Activated CD8-positive, alpha-beta T cell treated with anti-CD3 and anti-CD28 coated beads for 36 hours (primary cell): ENCODE measurements at regions of chr17 and their contacts with region 1.

Region 1: DNA sequence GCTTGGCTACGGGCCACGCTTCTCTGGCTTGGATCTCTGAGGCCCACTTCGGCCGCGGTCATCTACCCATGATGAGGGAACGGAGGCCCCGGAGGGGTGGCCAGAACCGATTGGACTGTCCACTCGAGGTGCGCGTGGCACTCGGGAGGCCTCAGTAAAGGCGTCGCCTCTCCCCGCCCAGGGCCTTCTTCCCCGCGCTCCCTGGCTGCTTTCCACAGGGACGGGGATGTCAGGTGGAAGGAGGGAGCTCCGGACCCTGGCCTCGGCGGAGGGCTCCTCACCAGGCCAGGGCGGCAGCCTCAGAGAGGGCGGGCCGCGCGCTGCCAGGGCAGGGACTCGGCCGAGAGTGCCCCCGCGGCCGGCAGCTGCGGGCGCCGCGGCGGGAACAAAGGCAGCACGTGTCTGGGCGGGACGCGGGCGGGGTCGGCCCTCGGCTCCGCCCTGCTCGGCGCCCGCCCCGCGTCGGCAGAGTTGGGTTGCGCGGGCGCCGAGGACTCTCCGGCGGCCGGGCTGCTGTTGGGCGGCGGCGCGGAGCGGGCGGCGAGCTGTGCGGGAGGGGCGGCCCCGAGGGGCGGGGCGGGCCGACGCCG is 587 bp upstream of the CDK5R1 start:
- DNase-seq: peak; percentile 61
- ATAC-seq: peak; percentile 74
- H3K4me3 Mint-ChIP-seq: peak overlapping the region; percentile 61
- H3K27ac Mint-ChIP-seq: peak overlapping the region; percentile 16
- H3K4me1 Mint-ChIP-seq: peaks cover 50% of the 10 kb centered on the region
- H3K27me3 Mint-ChIP-seq: no peaks in the 10 kb centered on the region
- CTCF ChIP-seq: no peak

Region 2: DNA sequence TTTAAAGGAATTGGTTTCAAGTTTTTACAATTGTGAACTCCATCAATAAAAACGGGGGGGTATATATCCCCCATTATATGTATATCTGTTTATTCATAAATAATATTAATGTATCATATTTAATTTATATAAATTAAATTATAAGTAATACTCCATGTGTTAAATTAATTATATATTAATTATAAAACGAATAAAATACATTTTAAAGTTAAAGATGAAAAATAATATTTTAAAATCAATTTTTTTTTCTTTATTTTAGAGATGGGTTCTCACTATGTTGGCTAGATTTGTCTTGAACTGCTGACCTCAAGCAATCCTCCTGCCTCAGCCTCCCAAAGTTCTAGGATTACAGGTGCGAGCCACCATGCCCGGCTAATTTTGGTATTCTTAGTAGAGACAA is 59.3 kb before region 1 on chr17:
- CTCF ChIA-PET with region 1: no interaction called
- POLR2A ChIA-PET with region 1: no interaction called
- intact Hi-C with region 1: no loop called
- DNase-seq: no peak
- ATAC-seq: no peak
- H3K4me3 Mint-ChIP-seq: no peak overlapping the region
- H3K27ac Mint-ChIP-seq: no peak overlapping the region
- H3K4me1 Mint-ChIP-seq: no peaks in the 10 kb centered on the region
- H3K27me3 Mint-ChIP-seq: no peaks in the 10 kb centered on the region
- CTCF ChIP-seq: no peak

Region 3: DNA sequence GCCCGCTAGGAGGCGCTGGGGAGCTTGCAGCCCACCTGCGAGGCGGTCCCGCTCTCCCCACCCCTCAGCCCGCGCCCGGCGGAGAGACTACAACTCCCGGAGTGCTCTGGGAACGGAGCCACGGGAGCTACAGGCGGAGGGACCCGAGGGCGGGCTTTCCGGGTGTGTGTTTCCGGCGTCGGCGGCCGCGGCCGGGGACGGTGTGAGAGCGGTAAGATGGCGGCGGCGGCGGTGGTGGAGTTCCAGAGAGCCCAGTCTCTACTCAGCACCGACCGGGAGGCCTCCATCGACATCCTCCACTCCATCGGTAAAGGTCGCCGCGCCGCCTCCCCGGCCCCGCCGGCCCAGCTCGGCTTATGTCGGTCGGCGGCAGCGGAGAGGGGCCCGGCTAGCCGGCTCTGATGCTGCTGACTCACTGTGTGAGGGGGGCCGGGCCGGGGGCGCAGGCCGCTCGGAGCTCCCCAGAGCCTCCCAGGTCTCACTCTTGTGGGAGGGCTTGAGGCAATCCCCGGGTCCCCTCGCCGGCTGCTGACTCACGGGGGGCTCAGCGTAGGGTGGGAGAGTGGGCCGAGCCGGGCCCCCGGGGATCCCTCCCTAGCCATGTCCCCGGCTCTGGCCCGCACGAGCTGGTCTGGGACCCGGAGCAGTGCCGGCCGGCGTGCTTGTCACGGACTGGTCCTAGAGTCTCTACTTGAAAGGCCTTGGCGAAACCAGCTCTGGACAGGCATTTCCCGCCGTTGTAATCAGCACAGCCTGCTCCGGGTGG is 41.7 kb before region 1 on chr17 and contains the start of gene PSMD11:
- CTCF ChIA-PET with region 1: interaction called, 12 read pairs
- POLR2A ChIA-PET with region 1: interaction called, 9 read pairs
- intact Hi-C with region 1: no loop called
- DNase-seq: peak; percentile 99
- ATAC-seq: peak; percentile 97
- H3K4me3 Mint-ChIP-seq: peak within 1 kb of the TSS; percentile 80
- H3K27ac Mint-ChIP-seq: peak within 1 kb of the TSS; percentile 76
- H3K4me1 Mint-ChIP-seq: peaks cover 37% of the 10 kb centered on the region
- H3K27me3 Mint-ChIP-seq: peaks cover 6% of the 10 kb centered on the region
- CTCF ChIP-seq: no peak
- total RNA-seq, gene PSMD11: 119 to 130 TPM

Region 4: GRCh38 chr17:32470405-32471167 is 15.6 kb before region 1 on chr17:
- CTCF ChIA-PET with region 1: interaction called, 13 read pairs
- POLR2A ChIA-PET with region 1: interaction called, 6 read pairs
- intact Hi-C with region 1: no loop called
- DNase-seq: no peak
- ATAC-seq: no peak
- H3K4me3 Mint-ChIP-seq: no peak overlapping the region
- H3K27ac Mint-ChIP-seq: peak overlapping the region; percentile 2
- H3K4me1 Mint-ChIP-seq: no peaks in the 10 kb centered on the region
- H3K27me3 Mint-ChIP-seq: no peaks in the 10 kb centered on the region
- CTCF ChIP-seq: no peak

Region 5: GRCh38 chr17:32519228-32520103 is 33.3 kb after region 1 on chr17:
- CTCF ChIA-PET with region 1: interaction called, 42 read pairs
- POLR2A ChIA-PET with region 1: interaction called, 43 read pairs
- intact Hi-C with region 1: loop called (anchors 5 kb)
- DNase-seq: peak; percentile 71
- ATAC-seq: peak; percentile 4
- H3K4me3 Mint-ChIP-seq: peak overlapping the region; percentile 74
- H3K27ac Mint-ChIP-seq: peak overlapping the region; percentile 91
- H3K4me1 Mint-ChIP-seq: peaks cover 84% of the 10 kb centered on the region
- H3K27me3 Mint-ChIP-seq: no peaks in the 10 kb centered on the region
- CTCF ChIP-seq: no peak

Region 6: DNA sequence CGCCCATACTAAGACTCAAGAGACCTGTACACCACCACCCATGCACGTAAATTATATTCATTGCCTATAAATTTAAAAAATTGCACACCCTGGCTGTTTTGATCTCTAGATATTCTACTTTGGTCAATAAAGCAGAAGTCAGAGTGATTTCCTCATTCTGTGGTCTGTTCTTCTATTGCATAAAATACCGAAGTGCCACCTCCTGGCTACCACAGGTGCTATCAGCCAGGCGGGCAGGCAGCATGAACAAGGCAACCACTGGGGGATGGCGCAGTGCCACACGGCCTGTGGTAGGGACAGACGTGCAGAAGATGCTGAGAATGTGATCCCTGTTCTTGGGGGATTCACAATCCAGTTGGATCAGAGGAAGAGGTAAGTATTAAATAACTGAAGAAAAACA is 122.9 kb after region 1 on chr17:
- CTCF ChIA-PET with region 1: interaction called, 31 read pairs
- POLR2A ChIA-PET with region 1: no interaction called
- intact Hi-C with region 1: loop called (anchors 5 kb)
- DNase-seq: peak; percentile 88
- ATAC-seq: peak; percentile 100
- H3K4me3 Mint-ChIP-seq: no peak overlapping the region
- H3K27ac Mint-ChIP-seq: no peak overlapping the region
- H3K4me1 Mint-ChIP-seq: peaks cover 6% of the 10 kb centered on the region
- H3K27me3 Mint-ChIP-seq: no peaks in the 10 kb centered on the region
- CTCF ChIP-seq: peak; percentile 73

Region 7: DNA sequence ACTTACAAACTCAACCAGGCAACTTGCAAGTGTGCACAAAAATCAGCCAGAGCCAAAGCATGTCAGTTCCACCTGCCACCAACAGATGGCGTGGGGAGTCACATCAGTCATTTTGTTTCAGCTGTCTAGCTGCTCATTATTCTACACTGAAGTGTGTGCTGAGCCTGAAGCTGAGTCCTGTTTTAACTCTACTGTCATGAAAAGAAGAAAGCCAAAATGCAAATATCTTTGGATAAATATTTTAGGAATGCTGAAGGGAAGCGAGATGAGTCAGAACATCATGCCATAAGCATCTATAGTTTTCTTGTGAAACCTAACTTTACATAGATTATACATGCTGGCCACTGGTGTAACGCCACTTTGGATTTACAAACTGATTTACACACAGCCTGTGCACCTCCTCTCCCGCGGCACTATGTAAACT is 173.2 kb after region 1 on chr17:
- CTCF ChIA-PET with region 1: interaction called, 25 read pairs
- POLR2A ChIA-PET with region 1: no interaction called
- intact Hi-C with region 1: no loop called
- DNase-seq: peak; percentile 83
- ATAC-seq: peak; percentile 78
- H3K4me3 Mint-ChIP-seq: no peak overlapping the region
- H3K27ac Mint-ChIP-seq: no peak overlapping the region
- H3K4me1 Mint-ChIP-seq: no peaks in the 10 kb centered on the region
- H3K27me3 Mint-ChIP-seq: no peaks in the 10 kb centered on the region
- CTCF ChIP-seq: peak; percentile 95

Region 8: DNA sequence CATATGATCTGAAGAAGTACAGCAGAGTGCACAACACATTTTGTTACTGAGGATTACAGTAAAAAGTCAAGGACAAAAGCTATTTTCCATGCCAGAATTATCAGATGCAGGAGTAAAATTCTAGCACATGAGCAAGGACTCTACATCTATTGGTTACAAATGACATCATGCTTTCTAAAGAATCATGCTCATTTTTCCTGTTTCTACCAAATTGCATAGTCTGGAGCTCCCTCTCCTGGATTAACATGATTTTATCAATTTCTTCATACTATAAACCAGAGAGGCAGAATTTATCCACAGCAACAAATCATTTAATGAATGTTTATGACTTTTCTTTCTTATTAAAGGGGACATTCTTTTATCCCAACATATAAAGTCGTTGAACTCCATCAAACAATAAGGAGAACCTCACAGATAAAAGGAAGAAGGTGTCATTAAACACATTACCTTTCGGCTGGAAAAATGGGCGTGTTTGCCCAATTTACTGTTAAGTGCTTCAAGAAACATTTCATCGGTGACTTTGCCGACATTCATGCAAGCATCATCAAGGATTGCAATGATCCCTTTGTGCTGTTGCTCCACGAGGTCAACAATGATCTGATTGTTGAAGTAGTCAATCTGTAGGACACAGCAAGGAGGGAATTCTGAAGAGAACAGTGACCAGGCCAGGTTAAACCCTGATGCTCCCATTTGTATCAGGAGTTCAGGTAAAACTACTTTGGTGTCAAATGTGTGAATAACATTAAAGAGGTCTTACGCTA is 269.0 kb after region 1 on chr17:
- CTCF ChIA-PET with region 1: interaction called, 6 read pairs
- POLR2A ChIA-PET with region 1: interaction called, 3 read pairs
- intact Hi-C with region 1: loop called (anchors 10 kb)
- DNase-seq: no peak
- ATAC-seq: peak; percentile 69
- H3K4me3 Mint-ChIP-seq: no peak overlapping the region
- H3K27ac Mint-ChIP-seq: no peak overlapping the region
- H3K4me1 Mint-ChIP-seq: peaks cover 15% of the 10 kb centered on the region
- H3K27me3 Mint-ChIP-seq: no peaks in the 10 kb centered on the region
- CTCF ChIP-seq: peak; percentile 59